WTC11 (cell line): ENCODE measurements at regions of chr1 and their contacts with region 1.

Region 1: DNA sequence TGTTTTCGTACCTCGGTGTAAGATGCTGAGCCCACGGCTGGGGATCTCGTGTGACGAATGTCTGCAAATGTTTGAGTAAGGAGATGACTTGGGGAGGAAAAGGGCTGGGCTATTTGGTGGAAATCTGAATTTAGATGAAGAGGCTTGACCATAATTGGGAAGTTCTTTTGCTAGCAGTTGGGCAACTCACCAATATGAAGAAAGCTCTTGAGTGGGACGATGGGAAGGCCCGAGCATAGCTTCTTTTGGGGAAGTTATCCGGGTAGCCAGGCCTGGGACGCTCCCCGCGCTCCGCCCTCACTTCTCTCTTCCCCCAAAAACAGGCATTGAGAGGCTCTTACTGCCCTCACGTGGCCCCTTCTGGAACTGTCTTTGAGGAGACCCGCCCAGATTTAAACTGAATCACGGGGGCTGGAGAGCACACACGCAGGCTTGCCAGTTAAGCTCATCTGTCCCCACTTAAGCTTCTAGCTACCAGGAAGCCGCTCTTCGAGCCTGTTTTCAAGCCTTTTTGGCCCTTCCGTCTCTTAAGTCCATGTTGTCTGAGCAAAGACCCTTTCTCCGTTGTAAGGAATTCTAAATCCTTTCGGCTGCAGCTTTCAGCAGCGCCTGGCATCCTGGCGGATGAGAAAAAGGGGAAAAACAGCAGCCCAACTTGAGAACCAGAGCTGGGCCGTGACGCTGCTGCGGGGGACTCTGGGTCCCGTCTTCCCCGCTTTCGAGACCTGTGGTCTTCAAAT is 93.1 kb downstream of the NID1 start:
- DNase-seq: peak; percentile 93
- ATAC-seq: peak; percentile 97
- H3K4me3 Mint-ChIP-seq: peak overlapping the region; percentile 81
- H3K27ac Mint-ChIP-seq: peak overlapping the region; percentile 72
- H3K4me1 Mint-ChIP-seq: peaks cover 8% of the 10 kb centered on the region
- H3K27me3 Mint-ChIP-seq: no peaks in the 10 kb centered on the region
- CTCF ChIP-seq: peak; percentile 63

Region 2: GRCh38 chr1:235734335-235734734 is 237.4 kb before region 1 on chr1:
- CTCF ChIA-PET with region 1: interaction called, 17 read pairs
- POLR2A ChIA-PET with region 1: no interaction called
- DNase-seq: no peak
- ATAC-seq: no peak
- H3K4me3 Mint-ChIP-seq: no peak overlapping the region
- H3K27ac Mint-ChIP-seq: no peak overlapping the region
- H3K4me1 Mint-ChIP-seq: no peaks in the 10 kb centered on the region
- H3K27me3 Mint-ChIP-seq: no peaks in the 10 kb centered on the region
- CTCF ChIP-seq: no peak

Region 3: GRCh38 chr1:235843461-235843961 is 128.2 kb before region 1 on chr1:
- CTCF ChIA-PET with region 1: interaction called, 49 read pairs
- POLR2A ChIA-PET with region 1: no interaction called
- DNase-seq: no peak
- ATAC-seq: peak; percentile 71
- H3K4me3 Mint-ChIP-seq: no peak overlapping the region
- H3K27ac Mint-ChIP-seq: no peak overlapping the region
- H3K4me1 Mint-ChIP-seq: peaks cover 4% of the 10 kb centered on the region
- H3K27me3 Mint-ChIP-seq: 0 out of 2 replicates have a peak, but pooled peaks cover 3% of the 10 kb centered on the region
- CTCF ChIP-seq: no peak

Region 4: DNA sequence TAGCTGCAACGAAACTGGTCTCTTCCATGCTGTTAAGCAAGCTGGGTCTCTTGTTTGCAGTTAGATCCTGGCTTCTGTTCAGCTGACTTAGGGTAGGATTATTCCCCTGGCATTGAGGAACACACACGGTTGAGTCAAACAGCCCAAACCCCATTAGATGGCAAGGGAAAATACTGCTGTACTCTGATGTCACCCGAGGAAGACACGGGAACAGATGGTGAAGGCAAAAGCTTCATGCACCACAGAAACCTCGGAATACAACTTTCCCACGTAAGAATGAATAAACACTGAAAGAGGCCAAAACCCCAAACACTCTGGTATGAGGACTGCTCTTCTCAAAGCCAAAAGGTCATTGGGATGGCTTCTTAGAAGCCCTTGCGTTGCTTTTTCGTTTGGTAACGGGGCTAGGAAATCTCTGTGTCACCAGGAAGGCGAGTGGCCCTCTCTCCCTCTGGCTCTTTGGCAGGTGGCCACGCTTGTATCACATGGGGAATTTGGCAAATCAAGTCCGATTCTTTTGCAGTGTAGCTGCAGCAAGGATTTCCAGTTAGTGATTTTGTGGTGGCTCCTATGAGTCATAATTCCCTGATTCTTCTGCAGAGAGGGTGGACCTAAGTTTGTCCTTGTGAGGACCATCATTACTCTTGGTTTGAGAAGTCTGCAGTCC is 88.3 kb before region 1 on chr1:
- CTCF ChIA-PET with region 1: interaction called, 10 read pairs
- POLR2A ChIA-PET with region 1: no interaction called
- DNase-seq: no peak
- ATAC-seq: no peak
- H3K4me3 Mint-ChIP-seq: no peak overlapping the region
- H3K27ac Mint-ChIP-seq: no peak overlapping the region
- H3K4me1 Mint-ChIP-seq: no peaks in the 10 kb centered on the region
- H3K27me3 Mint-ChIP-seq: 0 out of 2 replicates have a peak, but pooled peaks cover 3% of the 10 kb centered on the region
- CTCF ChIP-seq: no peak

Region 5: GRCh38 chr1:235933017-235933765 is 38.5 kb before region 1 on chr1:
- CTCF ChIA-PET with region 1: interaction called, 24 read pairs
- POLR2A ChIA-PET with region 1: no interaction called
- DNase-seq: no peak
- ATAC-seq: peak; percentile 41; the same call in 1 of the 2 replicates
- H3K4me3 Mint-ChIP-seq: no peak overlapping the region
- H3K27ac Mint-ChIP-seq: no peak overlapping the region
- H3K4me1 Mint-ChIP-seq: peaks cover 18% of the 10 kb centered on the region
- H3K27me3 Mint-ChIP-seq: no peaks in the 10 kb centered on the region; the same call in 1 of the 2 replicates
- CTCF ChIP-seq: no peak

Region 6: GRCh38 chr1:235984041-235984825 is 12.5 kb after region 1 on chr1:
- CTCF ChIA-PET with region 1: interaction called, 18 read pairs
- POLR2A ChIA-PET with region 1: interaction called, 8 read pairs
- DNase-seq: no peak
- ATAC-seq: no peak
- H3K4me3 Mint-ChIP-seq: no peak overlapping the region
- H3K27ac Mint-ChIP-seq: peak overlapping the region; percentile 23; the same call in 1 of the 2 replicates
- H3K4me1 Mint-ChIP-seq: peaks cover 9% of the 10 kb centered on the region
- H3K27me3 Mint-ChIP-seq: peaks cover under 1% of the 10 kb centered on the region; the same call in 1 of the 2 replicates
- CTCF ChIP-seq: no peak

Region 7: GRCh38 chr1:236030152-236030933 is 58.6 kb after region 1 on chr1:
- CTCF ChIA-PET with region 1: no interaction called
- POLR2A ChIA-PET with region 1: no interaction called
- DNase-seq: no peak
- ATAC-seq: no peak
- H3K4me3 Mint-ChIP-seq: no peak overlapping the region
- H3K27ac Mint-ChIP-seq: no peak overlapping the region
- H3K4me1 Mint-ChIP-seq: no peaks in the 10 kb centered on the region
- H3K27me3 Mint-ChIP-seq: no peaks in the 10 kb centered on the region
- CTCF ChIP-seq: no peak

Region 8: DNA sequence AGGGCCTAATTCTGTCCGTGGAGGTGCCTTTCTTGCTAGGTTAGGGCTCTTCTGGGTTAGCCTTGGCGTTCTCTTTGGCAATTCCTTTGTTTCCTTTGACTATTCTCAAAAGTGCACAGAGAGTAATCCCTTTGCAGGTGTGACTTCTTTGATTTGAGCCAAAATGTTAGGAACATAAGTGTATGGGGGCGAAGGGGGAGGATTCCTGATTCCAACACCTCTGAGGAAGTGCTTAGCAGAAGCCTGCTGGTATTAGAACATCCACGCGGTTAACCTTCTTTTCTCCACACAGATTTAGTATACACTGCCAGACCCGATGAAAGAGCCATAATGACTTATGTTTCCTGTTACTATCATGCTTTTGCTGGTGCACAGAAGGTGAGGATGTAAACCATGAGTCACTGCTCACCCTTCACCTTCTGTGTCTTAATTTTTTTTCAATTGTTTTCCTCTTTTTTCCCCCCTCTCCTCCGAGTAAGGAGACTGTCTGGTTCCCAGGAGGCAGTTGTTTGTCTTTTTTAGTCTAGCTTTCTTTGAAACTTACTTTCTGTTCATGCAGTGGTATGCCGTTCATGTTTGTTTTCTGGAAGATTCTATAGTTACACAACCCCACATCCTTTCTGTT is 762.5 kb after region 1 on chr1:
- CTCF ChIA-PET with region 1: no interaction called
- POLR2A ChIA-PET with region 1: no interaction called
- DNase-seq: no peak
- ATAC-seq: no peak
- H3K4me3 Mint-ChIP-seq: no peak overlapping the region
- H3K27ac Mint-ChIP-seq: no peak overlapping the region
- H3K4me1 Mint-ChIP-seq: peaks cover 30% of the 10 kb centered on the region
- H3K27me3 Mint-ChIP-seq: no peaks in the 10 kb centered on the region
- CTCF ChIP-seq: no peak